Esophagus muscularis mucosa (tissue), 4 donors: ENCODE measurements at regions of chr6 and their contacts with region 1.

Region 1: GRCh38 chr6:75526502-75527127 is 33.0 kb upstream of the FILIP1 start:
- DNase-seq: no peak
- H3K4me3 ChIP-seq: no peak overlapping the region
- H3K27ac ChIP-seq: no peak overlapping the region
- H3K4me1 ChIP-seq: peaks cover 4 to 22% (median 12%) of the 10 kb centered on the region in 4 donors
- H3K27me3 ChIP-seq: no peaks in the 10 kb centered on the region
- CTCF ChIP-seq: peak; percentile 66 to 76 (median 67)
- EP300 ChIP-seq: no peak
- POLR2A ChIP-seq: no peak

Region 2: GRCh38 chr6:75266716-75267291 is 259.8 kb before region 1 on chr6:
- intact Hi-C with region 1: loop called (anchors 5 kb)
- DNase-seq: no peak
- H3K4me3 ChIP-seq: no peak overlapping the region
- H3K27ac ChIP-seq: no peak overlapping the region
- H3K4me1 ChIP-seq: peaks cover 18 to 38% (median 27%) of the 10 kb centered on the region in 4 donors
- H3K27me3 ChIP-seq: no peaks in the 10 kb centered on the region
- CTCF ChIP-seq: peak; percentile 84 to 96 (median 88)
- EP300 ChIP-seq: no peak
- POLR2A ChIP-seq: no peak

Region 3: GRCh38 chr6:75296811-75297779 is 229.5 kb before region 1 on chr6:
- intact Hi-C with region 1: loop called (anchors 5 kb)
- DNase-seq: no peak
- H3K4me3 ChIP-seq: no peak overlapping the region
- H3K27ac ChIP-seq: no peak overlapping the region
- H3K4me1 ChIP-seq: peaks cover 13 to 23% (median 17%) of the 10 kb centered on the region in 4 donors
- H3K27me3 ChIP-seq: no peaks in the 10 kb centered on the region
- CTCF ChIP-seq: peak; percentile 68 to 70 (median 70)
- EP300 ChIP-seq: no peak
- POLR2A ChIP-seq: no peak

Region 4: DNA sequence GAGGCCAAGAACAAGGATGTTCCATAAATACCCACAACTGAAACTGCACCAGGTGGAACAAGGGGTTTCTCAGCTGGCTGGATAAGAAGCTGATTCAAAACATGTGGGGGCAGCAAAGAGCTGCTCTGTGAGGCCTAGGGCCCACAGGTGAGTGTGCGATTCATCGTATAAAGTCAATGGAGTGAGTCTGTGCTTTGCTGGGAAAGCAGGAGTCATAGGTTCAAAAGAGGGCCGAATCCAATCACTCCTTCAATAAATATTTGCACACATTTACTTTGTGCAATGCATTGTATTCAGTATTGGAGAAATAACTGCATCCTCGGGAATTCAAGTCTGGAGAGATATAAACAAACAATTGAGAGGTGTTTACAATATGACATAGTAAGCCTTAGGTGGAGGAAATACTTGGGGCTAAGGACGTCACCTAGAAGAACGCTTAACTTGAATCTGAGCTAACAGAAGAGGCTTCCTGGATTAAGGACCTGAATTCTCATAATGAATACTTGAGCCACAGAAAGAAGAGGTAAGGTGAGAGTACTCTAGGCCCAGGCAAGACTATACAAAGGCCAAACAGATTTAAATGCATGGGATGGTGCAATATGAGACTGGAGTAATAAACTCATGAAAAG is 158.3 kb before region 1 on chr6:
- intact Hi-C with region 1: loop called (anchors 5 kb)
- DNase-seq: no peak
- H3K4me3 ChIP-seq: no peak overlapping the region
- H3K27ac ChIP-seq: peak overlapping the region; percentile 43 to 68 (median 60)
- H3K4me1 ChIP-seq: peaks cover 25 to 37% (median 29%) of the 10 kb centered on the region in 4 donors
- H3K27me3 ChIP-seq: no peaks in the 10 kb centered on the region
- CTCF ChIP-seq: peak; percentile 57 to 62 (median 59)
- EP300 ChIP-seq: no peak
- POLR2A ChIP-seq: no peak